ENCODE measurements at regions of chr14 and their contacts with region 1.

Region 1: GRCh38 chr14:23562268-23563203 is 5.1 kb downstream of the AP1G2 start:
- DNase-seq: peak; percentile 54 to 81 (median 80)
- H3K4me3 ChIP-seq: no peak overlapping the region
- H3K27ac ChIP-seq: no peak overlapping the region
- H3K4me1 ChIP-seq: peaks cover 0 to 12% (median 6%) of the 10 kb centered on the region in 3 donors
- H3K27me3 ChIP-seq: no peaks in the 10 kb centered on the region
- CTCF ChIP-seq: peak; percentile 91

Region 2: GRCh38 chr14:23406244-23406643 is 156.3 kb before region 1 on chr14:
- intact Hi-C with region 1: no loop called
- DNase-seq: peak in 1 of 5 donors; percentile 20
- H3K4me3 ChIP-seq: no peak overlapping the region
- H3K27ac ChIP-seq: no peak overlapping the region
- H3K4me1 ChIP-seq: no peaks in the 10 kb centered on the region
- H3K27me3 ChIP-seq: no peaks in the 10 kb centered on the region
- CTCF ChIP-seq: no peak

Region 3: DNA sequence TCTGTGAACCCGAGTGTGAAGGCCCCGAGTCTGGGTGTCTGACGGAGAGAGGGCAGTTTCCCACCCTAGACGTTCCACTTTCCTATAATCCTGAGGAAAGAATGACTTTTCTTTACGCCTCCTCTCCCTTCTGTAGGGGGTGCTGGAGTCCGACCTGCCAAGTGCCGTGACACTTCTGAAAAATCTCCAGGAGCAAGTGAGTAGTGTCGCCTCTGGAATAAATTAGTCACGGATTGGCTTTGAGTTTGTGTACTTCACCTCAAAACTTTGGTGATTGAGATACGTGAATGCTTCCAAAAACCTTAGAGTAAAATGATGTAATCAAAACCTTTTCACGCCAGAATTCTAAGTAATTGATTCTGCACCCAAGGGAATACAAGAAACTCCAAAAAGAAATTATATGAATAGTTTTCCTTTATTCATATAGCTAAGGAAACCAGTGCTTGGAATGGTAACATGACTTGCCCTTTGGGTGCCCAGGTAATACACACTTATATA is 92.6 kb before region 1 on chr14:
- intact Hi-C with region 1: loop called (anchors 5 kb)
- DNase-seq: no peak
- H3K4me3 ChIP-seq: peak overlapping the region; percentile 92 to 100 (median 99)
- H3K27ac ChIP-seq: peak overlapping the region; percentile 60 to 84
- H3K4me1 ChIP-seq: peaks cover 0 to 10% (median 5%) of the 10 kb centered on the region in 3 donors
- H3K27me3 ChIP-seq: no peaks in the 10 kb centered on the region
- CTCF ChIP-seq: no peak

Region 4: DNA sequence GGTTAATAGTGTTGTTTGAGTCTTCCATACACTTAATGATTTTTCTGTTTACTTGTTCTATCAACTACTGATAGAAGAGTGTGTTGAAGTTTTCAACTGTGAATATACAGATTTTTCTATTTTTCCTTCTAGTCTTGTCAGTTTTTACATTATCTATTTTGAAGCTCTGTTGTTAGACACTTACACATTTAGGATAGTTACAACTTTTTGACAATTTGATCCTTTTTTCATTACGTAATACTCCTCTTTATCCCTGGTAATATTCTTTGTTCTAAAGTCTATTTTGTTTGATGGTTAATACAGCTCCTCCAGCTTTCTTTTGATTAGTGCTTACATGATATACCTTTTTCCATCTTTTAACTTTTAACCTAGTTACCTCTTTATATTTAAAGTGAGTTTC is 118.8 kb after region 1 on chr14:
- intact Hi-C with region 1: no loop called
- DNase-seq: no peak
- H3K4me3 ChIP-seq: no peak overlapping the region
- H3K27ac ChIP-seq: no peak overlapping the region
- H3K4me1 ChIP-seq: no peaks in the 10 kb centered on the region
- H3K27me3 ChIP-seq: no peaks in the 10 kb centered on the region
- CTCF ChIP-seq: no peak

Region 5: DNA sequence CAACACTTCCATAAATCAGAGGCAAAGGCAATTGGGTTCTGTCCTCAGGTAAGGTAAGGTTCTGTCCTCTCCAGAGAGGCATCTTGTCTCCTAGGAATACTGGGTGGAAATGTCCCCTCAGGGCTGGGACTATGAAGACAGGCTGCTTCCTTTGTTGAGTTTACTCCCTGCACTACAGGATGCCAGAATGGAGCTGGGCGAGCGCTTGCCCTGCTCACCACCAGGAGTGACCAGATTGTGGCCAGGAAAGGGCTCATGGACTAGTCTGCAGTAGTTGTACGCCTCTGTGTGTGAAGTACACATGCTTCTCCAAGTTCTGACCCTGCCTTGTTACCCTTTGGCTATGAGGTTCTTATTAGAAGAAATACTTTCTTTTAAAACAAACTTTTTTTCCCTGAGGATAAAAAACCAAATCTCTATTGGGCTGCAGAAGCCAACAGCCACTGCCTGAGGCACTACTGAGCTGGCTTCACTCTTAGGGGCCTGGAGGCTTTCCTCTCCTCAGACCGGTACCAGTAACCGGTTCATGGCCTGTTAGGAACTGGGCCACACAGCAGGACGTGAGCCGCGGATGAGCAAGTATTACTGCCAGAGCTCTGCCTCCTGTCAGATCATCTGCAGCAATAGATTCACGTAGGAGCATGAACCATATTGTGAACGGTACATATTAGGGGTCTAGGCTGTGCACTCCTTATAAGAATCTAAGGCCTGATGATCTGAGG is 156.8 kb after region 1 on chr14:
- intact Hi-C with region 1: no loop called
- DNase-seq: peak in 1 of 5 donors; percentile 58
- H3K4me3 ChIP-seq: no peak overlapping the region
- H3K27ac ChIP-seq: no peak overlapping the region
- H3K4me1 ChIP-seq: no peaks in the 10 kb centered on the region
- H3K27me3 ChIP-seq: no peaks in the 10 kb centered on the region
- CTCF ChIP-seq: no peak